ENCODE measurements at regions of chr12 and their contacts with region 1.

Region 1: GRCh38 chr12:116955382-116956021 is 44.8 kb downstream of the FBXW8 start:
- DNase-seq: peak; percentile 81
- H3K4me3 ChIP-seq: no peak overlapping the region
- H3K27ac ChIP-seq: no peak overlapping the region
- H3K4me1 ChIP-seq: no peaks in the 10 kb centered on the region
- H3K27me3 ChIP-seq: no peaks in the 10 kb centered on the region
- CTCF ChIP-seq: peak; percentile 37 to 57

Region 2: DNA sequence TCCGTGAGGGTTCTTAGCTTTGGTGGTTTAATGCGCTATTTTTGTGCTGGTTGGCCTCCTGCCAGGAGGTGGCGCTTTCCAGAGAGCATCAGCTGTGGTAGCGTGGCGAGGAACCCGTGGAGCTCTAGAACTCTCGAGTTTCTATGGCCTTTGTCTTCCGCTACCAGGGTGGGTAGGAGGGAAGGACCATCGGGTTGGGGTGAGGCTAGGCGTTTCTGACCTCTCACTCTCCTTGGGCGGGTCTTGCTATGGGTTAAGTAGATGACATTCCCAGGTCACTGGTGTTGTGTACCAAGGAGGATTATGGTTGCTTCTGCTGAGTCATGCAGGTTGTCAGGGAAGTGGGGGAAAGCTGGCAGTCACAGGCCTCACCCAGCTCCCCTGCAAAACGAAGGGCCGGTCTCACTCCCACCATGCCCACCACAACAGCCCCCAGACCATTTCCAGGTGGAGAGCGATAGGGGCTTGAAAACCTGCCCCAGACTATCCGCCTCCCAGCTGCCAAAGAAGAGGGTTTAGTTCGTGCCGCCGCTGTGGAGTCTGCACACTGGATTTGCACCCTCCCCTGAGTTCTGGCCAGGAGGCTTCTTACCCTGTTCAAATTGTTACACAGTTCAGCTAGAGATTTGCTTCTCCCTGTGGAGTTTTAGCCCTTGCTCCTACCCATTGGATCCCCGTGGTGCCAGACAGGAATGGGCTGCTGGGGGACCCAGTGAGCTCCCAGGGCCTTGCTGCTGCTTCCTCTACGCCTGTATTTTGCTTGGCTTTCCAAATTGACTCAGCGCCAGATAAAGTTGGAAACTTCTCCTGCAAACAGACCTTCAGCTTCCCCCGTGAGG is 195.5 kb before region 1 on chr12:
- CTCF ChIA-PET with region 1: no interaction called
- dilution Hi-C with region 1: loop called (anchors 10 kb)
- in situ Hi-C with region 1: no loop called
- intact Hi-C with region 1: no loop called
- DNase-seq: no peak
- H3K4me3 ChIP-seq: no peak overlapping the region
- H3K27ac ChIP-seq: no peak overlapping the region
- H3K4me1 ChIP-seq: no peaks in the 10 kb centered on the region
- H3K27me3 ChIP-seq: no peaks in the 10 kb centered on the region
- CTCF ChIP-seq: no peak

Region 3: GRCh38 chr12:116880817-116881324 is 74.6 kb before region 1 on chr12:
- CTCF ChIA-PET with region 1: interaction called, 3 read pairs
- dilution Hi-C with region 1: no loop called
- in situ Hi-C with region 1: no loop called
- intact Hi-C with region 1: loop called (anchors 1 kb)
- DNase-seq: peak; percentile 53
- H3K4me3 ChIP-seq: peak overlapping the region in 2 of 3 experiments; percentile 16 to 29
- H3K27ac ChIP-seq: no peak overlapping the region
- H3K4me1 ChIP-seq: peaks cover 13% of the 10 kb centered on the region
- H3K27me3 ChIP-seq: peaks cover 50% of the 10 kb centered on the region
- CTCF ChIP-seq: no peak

Measured in mammary epithelial cell (primary cell).